GM12878 (cell line): ENCODE measurements at regions of chr5 and their contacts with region 1.

Region 1: GRCh38 chr5:177403792-177404640 is 3.6 kb upstream of the PFN3 start:
- DNase-seq: no peak
- ATAC-seq: peak; percentile 93
- H3K4me3 ChIP-seq: peak overlapping the region; percentile 79
- H3K27ac ChIP-seq: peak overlapping the region; percentile 35; the same call in 1 of the 2 replicates
- H3K4me1 ChIP-seq: peaks cover 28% of the 10 kb centered on the region
- H3K27me3 ChIP-seq: no peaks in the 10 kb centered on the region; a peak in 1 of 4 replicates
- CTCF ChIP-seq: peak; percentile 81 to 95 (median 85)
- EP300 ChIP-seq: no peak
- POLR2A ChIP-seq: peak; percentile 55; the same call in 1 of the 2 replicates
- RAD21 ChIP-seq: peak; percentile 87

Region 2: GRCh38 chr5:177311723-177312648 is 92.0 kb before region 1 on chr5 and contains the start of gene MXD3:
- CTCF ChIA-PET with region 1: interaction called, 54 read pairs
- POLR2A ChIA-PET with region 1: interaction called, 3 read pairs
- RAD21 ChIA-PET with region 1: interaction called, 26 read pairs
- SMC1A ChIA-PET with region 1: interaction called, 4 read pairs
- in situ Hi-C with region 1: no loop called
- intact Hi-C with region 1: no loop called
- DNase-seq: peak; percentile 76
- ATAC-seq: peak; percentile 89
- H3K4me3 ChIP-seq: peak within 1 kb of the TSS; percentile 93
- H3K27ac ChIP-seq: peak within 1 kb of the TSS; percentile 92
- H3K4me1 ChIP-seq: peaks cover 17% of the 10 kb centered on the region
- H3K27me3 ChIP-seq: no peaks in the 10 kb centered on the region
- CTCF ChIP-seq: no peak
- EP300 ChIP-seq: no peak
- POLR2A ChIP-seq: peak; percentile 78
- RAD21 ChIP-seq: no peak
- polyA plus RNA-seq, gene MXD3: 0.24 to 0.93 TPM

Region 3: GRCh38 chr5:177357459-177358351 is 46.3 kb before region 1 on chr5 and contains the start of gene RGS14:
- CTCF ChIA-PET with region 1: interaction called, 12 read pairs
- POLR2A ChIA-PET with region 1: interaction called, 4 read pairs
- RAD21 ChIA-PET with region 1: interaction called, 11 read pairs
- SMC1A ChIA-PET with region 1: interaction called, 5 read pairs
- in situ Hi-C with region 1: no loop called
- intact Hi-C with region 1: no loop called
- DNase-seq: peak; percentile 77
- ATAC-seq: peak; percentile 91
- H3K4me3 ChIP-seq: peak within 1 kb of the TSS; percentile 99
- H3K27ac ChIP-seq: peak within 1 kb of the TSS; percentile 91
- H3K4me1 ChIP-seq: peaks cover 48% of the 10 kb centered on the region
- H3K27me3 ChIP-seq: no peaks in the 10 kb centered on the region
- CTCF ChIP-seq: no peak
- EP300 ChIP-seq: peak; percentile 25 to 55; a peak in 2 of 4 replicates
- POLR2A ChIP-seq: peak; percentile 82
- RAD21 ChIP-seq: no peak
- polyA plus RNA-seq, gene RGS14: 0.19 to 1.3 TPM

Region 4: DNA sequence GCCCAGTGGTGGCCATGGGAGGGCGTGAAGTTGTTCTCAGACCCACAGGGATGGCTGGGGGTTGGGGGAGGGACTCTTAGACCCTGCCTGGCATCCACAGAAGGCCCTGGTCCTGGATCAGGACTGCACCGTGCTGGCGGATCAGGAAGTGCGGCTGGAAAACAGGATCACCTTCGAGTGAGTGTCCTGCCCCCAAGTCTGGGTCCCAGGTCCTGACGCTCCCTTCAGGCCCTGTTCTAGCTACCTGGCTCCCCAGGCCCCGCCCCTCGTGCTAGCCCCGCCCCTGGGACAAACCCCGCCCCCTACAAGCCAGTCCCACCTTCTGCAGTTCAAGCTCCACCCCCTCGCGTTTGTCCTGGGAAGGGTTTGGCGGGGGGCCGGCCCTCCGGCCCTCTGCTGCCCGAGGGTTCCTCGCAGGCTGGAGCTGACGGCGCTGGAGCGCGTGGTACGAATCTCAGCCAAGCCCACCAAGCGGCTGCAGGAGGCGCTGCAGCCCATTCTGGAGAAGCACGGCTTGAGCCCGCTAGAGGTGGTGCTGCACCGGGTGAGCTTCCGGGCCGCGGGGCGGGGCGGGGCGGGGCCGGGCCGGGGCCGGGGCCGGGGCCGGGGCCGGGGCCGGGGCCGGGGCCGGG is 33.4 kb before region 1 on chr5:
- CTCF ChIA-PET with region 1: interaction called, 44 read pairs
- POLR2A ChIA-PET with region 1: interaction called, 5 read pairs
- RAD21 ChIA-PET with region 1: interaction called, 14 read pairs
- SMC1A ChIA-PET with region 1: interaction called, 10 read pairs
- in situ Hi-C with region 1: no loop called
- intact Hi-C with region 1: no loop called
- DNase-seq: no peak
- ATAC-seq: peak; percentile 87
- H3K4me3 ChIP-seq: no peak overlapping the region
- H3K27ac ChIP-seq: no peak overlapping the region
- H3K4me1 ChIP-seq: peaks cover 28% of the 10 kb centered on the region
- H3K27me3 ChIP-seq: no peaks in the 10 kb centered on the region
- CTCF ChIP-seq: peak; percentile 9 to 52 (median 45); a peak in 4 of 6 replicates
- EP300 ChIP-seq: no peak
- POLR2A ChIP-seq: no peak
- RAD21 ChIP-seq: no peak

Region 5: DNA sequence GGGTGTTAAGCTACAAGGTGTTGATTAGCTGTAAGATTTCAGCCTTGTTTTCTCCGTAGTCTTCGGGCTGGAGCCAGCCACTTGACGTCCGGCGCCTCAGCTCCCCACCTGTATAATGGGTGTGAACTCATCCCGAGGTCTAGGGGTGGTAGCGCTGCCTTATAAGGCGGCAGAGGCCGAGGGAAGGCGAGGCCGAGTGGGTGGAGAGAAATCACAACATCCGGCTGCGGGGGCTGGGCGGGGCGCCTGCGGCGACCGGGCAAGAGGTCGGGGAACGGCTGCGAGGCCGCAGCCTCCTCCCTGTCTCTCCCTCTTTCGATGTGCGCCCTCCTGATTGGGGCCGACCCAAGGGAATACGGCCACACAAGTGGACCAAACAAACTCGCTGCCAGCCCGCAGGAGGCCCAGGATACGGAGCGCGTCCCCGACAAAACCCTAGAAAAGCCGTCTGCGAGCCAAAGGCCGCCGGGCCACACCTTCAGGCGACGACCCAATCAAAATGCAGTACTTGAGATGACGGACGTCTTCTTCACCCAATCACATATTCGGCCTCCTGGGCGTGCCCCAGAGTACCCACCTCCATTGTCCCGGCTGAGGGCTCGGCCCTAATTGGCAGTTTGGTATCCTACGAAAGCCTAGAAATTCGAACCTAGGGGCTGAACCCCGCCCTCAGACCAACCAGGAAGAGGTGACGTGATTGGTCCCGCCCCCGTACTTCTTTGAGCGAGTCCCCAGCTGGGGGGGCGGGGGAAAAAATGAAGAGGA is 22.0 kb after region 1 on chr5:
- CTCF ChIA-PET with region 1: interaction called, 188 read pairs
- POLR2A ChIA-PET with region 1: interaction called, 174 read pairs
- RAD21 ChIA-PET with region 1: interaction called, 128 read pairs
- SMC1A ChIA-PET with region 1: interaction called, 64 read pairs
- in situ Hi-C with region 1: no loop called
- intact Hi-C with region 1: loop called (anchors 1 kb)
- DNase-seq: peak; percentile 100
- ATAC-seq: peak; percentile 81
- H3K4me3 ChIP-seq: peak overlapping the region; percentile 62; the same call in 1 of the 2 replicates
- H3K27ac ChIP-seq: peak overlapping the region; percentile 99
- H3K4me1 ChIP-seq: peaks cover 37% of the 10 kb centered on the region
- H3K27me3 ChIP-seq: no peaks in the 10 kb centered on the region
- CTCF ChIP-seq: no peak
- EP300 ChIP-seq: peak in 1 of 2 experiments; percentile 43; a peak in 1 of 4 replicates
- POLR2A ChIP-seq: no peak
- RAD21 ChIP-seq: no peak

Region 6: DNA sequence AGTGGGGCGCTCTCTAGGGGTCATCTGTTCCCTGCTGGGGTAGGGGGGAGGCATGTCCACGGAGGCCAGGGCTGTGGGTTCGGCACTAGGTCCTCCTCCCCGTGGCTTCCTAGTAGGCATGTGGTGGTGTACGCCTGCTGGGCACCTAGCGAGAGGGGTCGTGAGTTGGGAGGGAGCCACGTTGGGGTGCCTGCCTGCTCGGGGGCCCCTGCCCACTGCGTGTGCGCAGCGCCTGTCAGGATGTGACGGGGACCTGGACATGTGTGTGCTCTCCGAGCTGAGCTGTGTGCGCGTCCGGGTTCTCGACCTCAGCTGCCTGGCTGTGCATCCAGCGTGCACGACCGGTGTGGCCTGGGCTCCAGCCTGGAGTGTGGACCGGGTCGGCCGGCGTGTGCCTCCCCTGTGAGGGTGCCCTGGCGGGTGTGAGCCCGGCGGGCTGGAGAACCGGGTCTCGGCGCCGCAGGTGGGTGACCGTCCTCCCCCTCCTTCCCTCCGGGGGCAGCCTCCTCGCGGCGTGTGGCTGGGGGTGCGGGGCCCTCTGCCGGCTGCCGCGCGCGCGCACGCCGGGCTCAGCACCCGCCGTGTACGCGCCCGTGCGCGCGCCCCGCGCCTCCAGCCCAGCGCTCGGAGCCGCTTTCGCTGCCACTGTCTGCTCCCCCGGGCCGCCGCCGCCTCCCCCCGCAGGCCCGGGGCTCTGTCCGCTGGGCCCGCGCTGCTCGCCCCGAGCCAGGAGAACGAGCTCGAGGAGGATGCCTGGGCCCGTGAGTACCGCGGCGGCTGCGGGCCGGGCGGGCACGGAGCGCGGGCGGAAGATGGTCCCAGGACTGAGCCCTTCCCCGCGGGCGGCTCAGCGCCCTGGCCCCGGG is 42.4 kb after region 1 on chr5 and contains the start of gene PRR7:
- CTCF ChIA-PET with region 1: interaction called, 391 read pairs
- POLR2A ChIA-PET with region 1: interaction called, 76 read pairs
- RAD21 ChIA-PET with region 1: interaction called, 291 read pairs
- SMC1A ChIA-PET with region 1: interaction called, 105 read pairs
- in situ Hi-C with region 1: no loop called
- intact Hi-C with region 1: no loop called
- DNase-seq: no peak
- ATAC-seq: peak; percentile 55
- H3K4me3 ChIP-seq: peak within 1 kb of the TSS; percentile 78
- H3K27ac ChIP-seq: peak within 1 kb of the TSS; percentile 79
- H3K4me1 ChIP-seq: peaks cover 32% of the 10 kb centered on the region
- H3K27me3 ChIP-seq: no peaks in the 10 kb centered on the region
- CTCF ChIP-seq: peak in 1 of 3 experiments; percentile 26; a peak in 1 of 6 replicates
- EP300 ChIP-seq: 0 out of 4 replicates have a peak, but pooled peaks of 1 of the 2 experiments have one; percentile 15
- POLR2A ChIP-seq: no peak
- RAD21 ChIP-seq: no peak
- polyA plus RNA-seq, gene PRR7: not detected

Region 7: GRCh38 chr5:177497292-177498033 is 93.4 kb after region 1 on chr5 and contains the start of gene PDLIM7:
- CTCF ChIA-PET with region 1: interaction called, 72 read pairs
- POLR2A ChIA-PET with region 1: interaction called, 10 read pairs
- RAD21 ChIA-PET with region 1: interaction called, 21 read pairs
- SMC1A ChIA-PET with region 1: interaction called, 17 read pairs
- in situ Hi-C with region 1: no loop called
- intact Hi-C with region 1: no loop called
- DNase-seq: peak; percentile 77
- ATAC-seq: peak; percentile 81
- H3K4me3 ChIP-seq: peak within 1 kb of the TSS; percentile 86
- H3K27ac ChIP-seq: peak within 1 kb of the TSS; percentile 74
- H3K4me1 ChIP-seq: peaks cover 42% of the 10 kb centered on the region
- H3K27me3 ChIP-seq: no peaks in the 10 kb centered on the region; a peak in 1 of 4 replicates
- CTCF ChIP-seq: 0 out of 6 replicates have a peak, but pooled peaks of 1 of the 3 experiments have one; percentile 0
- EP300 ChIP-seq: no peak
- POLR2A ChIP-seq: peak; percentile 98
- RAD21 ChIP-seq: no peak
- polyA plus RNA-seq, gene PDLIM7: 0.82 to 2.3 TPM

Region 8: GRCh38 chr5:178232124-178232919 is 828.3 kb after region 1 on chr5 and contains the start of gene PHYKPL:
- CTCF ChIA-PET with region 1: no interaction called
- POLR2A ChIA-PET with region 1: no interaction called
- RAD21 ChIA-PET with region 1: no interaction called
- SMC1A ChIA-PET with region 1: no interaction called
- in situ Hi-C with region 1: no loop called
- intact Hi-C with region 1: no loop called
- DNase-seq: no peak
- ATAC-seq: peak; percentile 82
- H3K4me3 ChIP-seq: peak within 1 kb of the TSS; percentile 93
- H3K27ac ChIP-seq: peak within 1 kb of the TSS; percentile 75
- H3K4me1 ChIP-seq: peaks cover 24% of the 10 kb centered on the region
- H3K27me3 ChIP-seq: no peaks in the 10 kb centered on the region
- CTCF ChIP-seq: 0 out of 6 replicates have a peak, but pooled peaks of 1 of the 3 experiments have one; percentile 17
- EP300 ChIP-seq: no peak
- POLR2A ChIP-seq: peak; percentile 72
- RAD21 ChIP-seq: no peak
- polyA plus RNA-seq, gene PHYKPL: 4.5 to 7.9 TPM